HepG2 (cell line): ENCODE measurements at regions of chr7 and their contacts with region 1.

Region 1: DNA sequence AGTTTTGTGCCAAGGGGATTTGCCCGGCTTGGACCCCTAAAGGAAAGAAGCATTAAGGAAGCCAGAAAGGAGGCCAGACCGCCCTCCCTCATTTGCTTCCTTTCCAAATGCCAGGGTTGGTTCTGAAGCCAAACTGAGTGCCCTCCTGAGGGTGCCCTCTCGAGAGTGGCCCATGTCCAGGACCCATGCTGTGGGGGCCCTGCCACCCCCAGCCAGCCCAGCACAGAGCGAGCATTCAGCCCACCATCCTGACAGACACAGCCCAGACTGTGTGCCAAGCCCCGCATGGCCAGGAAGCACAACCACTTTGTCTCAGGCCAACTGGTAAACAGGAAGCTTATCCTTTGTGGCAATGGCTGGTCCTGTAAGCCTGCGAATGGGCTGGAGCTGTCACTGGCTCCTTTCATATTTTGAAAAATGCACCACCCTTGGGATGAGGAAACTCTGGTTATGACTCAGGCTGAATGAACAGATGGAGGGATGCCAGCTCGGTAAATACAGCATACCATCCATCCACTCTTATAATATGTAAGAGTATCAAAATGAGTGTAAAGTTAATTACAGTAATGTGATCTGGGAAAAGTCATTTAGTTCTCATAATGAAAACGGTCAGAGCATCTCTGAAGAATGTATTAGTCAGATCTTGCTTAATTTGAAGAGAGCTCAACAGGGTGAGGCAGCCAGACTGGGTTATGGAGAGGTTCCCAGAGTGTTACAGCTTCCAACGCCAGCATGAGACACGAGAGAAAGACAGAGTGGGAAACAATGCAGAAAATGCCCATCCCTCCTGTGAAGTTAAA is 65.0 kb downstream of the STK17A start:
- DNase-seq: peak; percentile 33
- ATAC-seq: peak; percentile 9; the same call in 1 of the 3 replicates
- H3K4me3 ChIP-seq: no peak overlapping the region
- H3K27ac ChIP-seq: peak overlapping the region; percentile 9
- H3K4me1 ChIP-seq: peaks cover 51% of the 10 kb centered on the region
- H3K27me3 ChIP-seq: no peaks in the 10 kb centered on the region
- CTCF ChIP-seq: no peak
- EP300 ChIP-seq: no peak
- POLR2A ChIP-seq: no peak
- RAD21 ChIP-seq: no peak

Region 2: DNA sequence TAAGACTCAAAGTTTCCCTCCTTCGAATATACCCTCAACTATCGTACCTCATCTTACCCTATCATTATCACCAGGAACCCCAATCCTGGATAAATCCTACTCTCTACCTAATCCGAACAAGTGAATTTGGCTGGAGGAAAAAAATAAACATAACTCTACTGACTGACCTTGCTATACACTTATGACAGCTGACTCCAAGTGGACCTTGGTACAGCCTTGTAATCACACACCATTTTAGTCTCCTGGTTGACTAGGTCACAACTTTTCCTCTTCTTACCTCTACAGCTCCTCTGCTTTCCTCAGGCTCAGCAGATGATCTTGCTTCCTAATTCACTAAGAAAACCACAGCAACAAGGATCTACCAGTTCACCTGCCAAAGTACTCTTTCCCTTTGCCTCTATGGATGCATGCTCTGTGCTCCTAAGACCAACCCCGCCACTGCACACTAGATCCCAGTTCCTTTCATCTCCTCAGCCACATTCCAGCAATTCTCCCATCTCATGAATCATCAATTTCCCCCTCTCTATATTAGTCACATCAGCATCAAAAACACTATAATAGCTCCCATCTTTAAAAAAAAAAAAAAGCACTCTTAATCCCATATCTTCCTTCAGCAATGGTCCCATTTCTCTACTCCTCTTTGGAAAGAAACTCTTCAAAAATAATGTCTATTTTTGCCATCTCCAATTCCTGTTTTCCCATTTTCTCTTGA is 46.0 kb after region 1 on chr7:
- CTCF ChIA-PET with region 1: no interaction called
- POLR2A ChIA-PET with region 1: no interaction called
- in situ Hi-C with region 1: loop called (anchors 10 kb)
- intact Hi-C with region 1: no loop called
- DNase-seq: peak; percentile 22
- ATAC-seq: peak; percentile 69
- H3K4me3 ChIP-seq: no peak overlapping the region
- H3K27ac ChIP-seq: peak overlapping the region; percentile 26
- H3K4me1 ChIP-seq: peaks cover 60% of the 10 kb centered on the region
- H3K27me3 ChIP-seq: no peaks in the 10 kb centered on the region
- CTCF ChIP-seq: no peak
- EP300 ChIP-seq: no peak
- POLR2A ChIP-seq: no peak
- RAD21 ChIP-seq: no peak